ENCODE measurements at regions of chr5 and their contacts with region 1.

Region 1: DNA sequence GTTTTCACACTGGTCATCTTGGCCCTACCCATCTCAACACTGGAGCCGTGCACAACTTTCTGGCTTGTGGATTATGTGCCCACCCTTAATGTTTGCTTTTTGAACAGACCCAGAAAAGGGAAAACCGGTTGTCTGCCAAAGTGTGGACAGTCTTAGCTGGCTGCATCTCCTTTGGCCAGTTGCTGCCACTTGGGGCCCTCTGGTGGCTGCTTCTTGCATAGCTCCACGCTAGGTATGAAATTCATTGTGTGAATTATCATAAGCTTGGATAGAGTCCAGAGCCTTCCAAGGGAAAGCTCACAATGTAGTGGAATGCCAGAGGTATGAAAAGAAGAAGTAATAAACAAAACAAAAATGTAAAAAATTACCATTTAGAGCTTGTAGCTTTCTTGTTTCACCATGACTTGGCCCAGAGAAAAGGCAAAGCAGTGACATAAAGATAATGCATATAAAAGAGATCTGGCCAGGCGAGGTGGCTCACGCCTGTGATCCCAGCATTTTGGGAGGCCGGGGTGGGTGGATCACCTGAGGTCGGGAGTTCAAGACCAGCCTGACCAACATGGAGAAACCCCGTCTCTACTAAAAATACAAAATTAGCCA is 12.5 kb upstream of the SLC36A3 start:
- DNase-seq: peak; percentile 67 to 71 (median 68)
- ATAC-seq: peak; percentile 98
- H3K4me3 ChIP-seq: no peak overlapping the region
- H3K27ac ChIP-seq: no peak overlapping the region
- H3K4me1 ChIP-seq: no peaks in the 10 kb centered on the region
- H3K27me3 ChIP-seq: peaks cover 0 to 9% of the 10 kb centered on the region in 2 experiments; a peak in 1 of 5 replicates
- CTCF ChIP-seq: peak; percentile 82 to 90 (median 89)
- EP300 ChIP-seq: no peak
- POLR2A ChIP-seq: no peak
- RAD21 ChIP-seq: peak; percentile 70 to 85

Region 2: DNA sequence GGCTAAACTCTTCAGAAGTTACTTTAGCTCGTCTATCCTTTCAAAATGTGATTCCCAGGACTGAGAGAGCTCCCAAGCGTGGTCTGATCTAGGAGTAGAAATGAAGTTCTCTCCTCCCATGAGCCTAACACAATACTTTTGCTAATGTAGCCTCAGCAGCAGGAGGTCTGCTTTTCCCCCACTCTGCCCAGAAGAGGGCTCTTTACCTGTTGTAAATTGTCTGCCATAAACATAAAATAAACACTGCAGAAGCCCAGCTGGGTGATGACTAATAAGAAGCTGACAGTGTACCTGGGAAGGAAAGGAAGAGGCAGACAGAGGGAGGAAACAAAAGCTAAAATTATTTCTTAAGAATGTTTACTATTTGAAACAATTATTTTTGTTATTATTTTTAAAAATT is 27.9 kb before region 1 on chr5:
- CTCF ChIA-PET with region 1: no interaction called
- POLR2A ChIA-PET with region 1: no interaction called
- in situ Hi-C with region 1: no loop called
- intact Hi-C with region 1: loop called (anchors 2 kb)
- DNase-seq: peak in 2 of 4 experiments; percentile 16 to 19
- ATAC-seq: peak; percentile 77
- H3K4me3 ChIP-seq: no peak overlapping the region
- H3K27ac ChIP-seq: no peak overlapping the region
- H3K4me1 ChIP-seq: no peaks in the 10 kb centered on the region
- H3K27me3 ChIP-seq: peaks cover 0 to 10% of the 10 kb centered on the region in 2 experiments; a peak in 4 of 5 replicates
- CTCF ChIP-seq: peak in 2 of 3 experiments; percentile 21 to 24; a peak in 1 of 6 replicates
- EP300 ChIP-seq: no peak
- POLR2A ChIP-seq: no peak
- RAD21 ChIP-seq: peak in 1 of 2 experiments; percentile 28; a peak in 2 of 4 replicates

Measured in K562 (cell line).